Activated T-helper 1 cell treated with anti-CD3 and anti-CD28 coated beads, Interleukin-12 subunit alpha, Interleukin-12 subunit beta, Interleukin-2, Interleukin-4 antibody, amounts not matched to agents 30 ng/mL and 10 ng/mL and 1 ng/mL, durations not matched to agents 14 hours and 24 hours and 36 hours (primary cell): ENCODE measurements at regions of chr1 and their contacts with region 1.

Region 1: GRCh38 chr1:84573967-84574842 is at the start of gene CTBS:
- DNase-seq: peak; percentile 76
- H3K4me3 Mint-ChIP-seq: peak within 1 kb of the TSS; percentile 98
- H3K27ac Mint-ChIP-seq: peak within 1 kb of the TSS; percentile 100
- H3K4me1 Mint-ChIP-seq: peaks cover 48% of the 10 kb centered on the region
- H3K27me3 Mint-ChIP-seq: peaks cover 2% of the 10 kb centered on the region
- total RNA-seq, gene CTBS: 14.2 and 14.5 TPM in 2 replicates

Region 2: GRCh38 chr1:83086346-83086745 is 1487.9 kb before region 1 on chr1:
- intact Hi-C with region 1: no loop called
- DNase-seq: no peak
- H3K4me3 Mint-ChIP-seq: no peak overlapping the region
- H3K27ac Mint-ChIP-seq: no peak overlapping the region
- H3K4me1 Mint-ChIP-seq: no peaks in the 10 kb centered on the region
- H3K27me3 Mint-ChIP-seq: no peaks in the 10 kb centered on the region

Region 3: DNA sequence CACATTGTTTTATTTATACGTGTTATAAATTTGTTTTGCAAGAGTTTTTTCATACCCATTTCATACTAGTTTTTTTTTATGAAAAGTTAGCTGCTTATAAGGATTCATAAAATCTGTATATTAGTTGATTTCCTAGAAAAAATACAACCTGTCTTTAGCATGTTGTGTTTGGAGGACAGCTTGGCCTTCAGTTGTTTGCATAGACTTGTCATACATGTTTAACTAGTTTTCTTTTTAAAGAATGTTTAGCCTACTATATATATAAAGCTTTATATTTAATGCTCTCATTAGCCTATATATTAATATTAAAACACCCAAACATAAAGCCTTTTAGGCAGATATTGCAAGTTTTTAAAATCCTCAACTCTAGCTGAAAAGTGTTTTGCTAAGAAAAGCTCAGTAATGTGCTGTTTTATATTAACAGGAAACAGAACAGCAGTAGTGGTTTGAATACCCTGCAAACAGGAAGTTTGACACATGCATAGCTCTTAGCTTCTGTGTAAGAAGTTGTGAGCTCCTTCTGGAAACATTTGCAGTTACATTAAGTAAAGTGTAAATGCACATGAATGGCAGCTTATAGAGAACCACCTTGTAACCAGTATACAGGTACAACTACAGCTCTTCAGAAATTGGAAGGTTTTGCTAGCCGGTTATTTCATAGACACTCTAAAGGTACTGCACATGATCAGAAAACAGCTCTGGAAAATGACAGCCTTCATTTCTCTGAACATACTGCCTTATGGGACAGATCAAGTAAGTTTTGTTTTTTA is 430.2 kb before region 1 on chr1 and contains the start of gene PRKACB:
- intact Hi-C with region 1: loop called (anchors 1 kb)
- DNase-seq: peak; percentile 20
- H3K4me3 Mint-ChIP-seq: peak within 1 kb of the TSS; percentile 96
- H3K27ac Mint-ChIP-seq: peak within 1 kb of the TSS; percentile 99
- H3K4me1 Mint-ChIP-seq: peaks cover 44% of the 10 kb centered on the region
- H3K27me3 Mint-ChIP-seq: no peaks in the 10 kb centered on the region
- total RNA-seq, gene PRKACB: 20.8 and 22.7 TPM in 2 replicates

Region 4: DNA sequence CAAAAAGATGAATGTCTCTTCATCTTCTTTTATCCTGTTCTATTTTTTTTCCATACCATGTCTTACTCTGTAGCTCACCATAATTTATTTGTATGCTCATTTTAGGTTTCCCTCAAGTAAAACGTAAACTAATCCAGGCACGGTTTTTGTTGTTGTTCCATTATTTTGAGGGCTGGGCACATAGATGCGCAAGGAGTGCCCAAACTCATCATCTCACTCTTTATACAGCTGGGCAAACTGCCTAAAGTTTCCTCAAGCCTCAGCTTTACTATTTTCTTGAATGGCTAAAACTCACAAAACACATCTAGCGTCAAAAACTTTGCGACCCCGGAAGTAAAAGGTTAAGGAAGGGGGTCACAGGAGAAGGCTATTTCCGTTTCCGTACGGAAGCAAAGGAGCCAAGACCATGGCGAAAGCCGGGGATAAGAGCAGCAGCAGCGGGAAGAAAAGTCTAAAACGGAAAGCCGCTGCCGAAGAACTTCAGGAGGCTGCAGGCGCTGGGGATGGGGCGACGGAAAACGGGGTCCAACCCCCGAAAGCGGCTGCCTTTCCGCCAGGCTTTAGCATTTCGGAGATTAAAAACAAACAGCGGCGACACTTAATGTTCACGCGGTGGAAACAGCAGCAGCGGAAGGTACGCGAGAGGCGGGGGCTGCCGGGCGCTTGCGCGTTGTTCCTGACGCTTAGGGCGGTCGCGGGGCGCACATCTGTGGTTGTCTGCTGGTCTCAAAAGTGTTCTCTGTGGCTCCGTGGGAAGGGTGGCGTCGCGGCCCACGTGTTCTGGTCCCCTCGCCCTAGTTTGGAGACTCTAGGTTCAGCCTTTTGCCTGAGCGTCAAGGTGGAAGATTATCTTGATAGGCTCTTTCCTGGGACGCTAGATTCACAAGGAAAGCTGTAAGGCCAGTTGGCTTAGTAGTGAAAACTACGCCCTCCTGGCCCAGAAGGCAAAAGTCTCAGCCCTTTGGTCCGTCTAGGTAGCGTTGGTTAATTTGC is 95.0 kb before region 1 on chr1 and contains the start of gene RPF1:
- intact Hi-C with region 1: loop called (anchors 1 kb)
- DNase-seq: peak; percentile 70
- H3K4me3 Mint-ChIP-seq: peak within 1 kb of the TSS; percentile 98
- H3K27ac Mint-ChIP-seq: peak within 1 kb of the TSS; percentile 97
- H3K4me1 Mint-ChIP-seq: peaks cover 34% of the 10 kb centered on the region
- H3K27me3 Mint-ChIP-seq: peaks cover 28% of the 10 kb centered on the region
- total RNA-seq, gene RPF1: 65.2 and 65.5 TPM in 2 replicates

Region 5: DNA sequence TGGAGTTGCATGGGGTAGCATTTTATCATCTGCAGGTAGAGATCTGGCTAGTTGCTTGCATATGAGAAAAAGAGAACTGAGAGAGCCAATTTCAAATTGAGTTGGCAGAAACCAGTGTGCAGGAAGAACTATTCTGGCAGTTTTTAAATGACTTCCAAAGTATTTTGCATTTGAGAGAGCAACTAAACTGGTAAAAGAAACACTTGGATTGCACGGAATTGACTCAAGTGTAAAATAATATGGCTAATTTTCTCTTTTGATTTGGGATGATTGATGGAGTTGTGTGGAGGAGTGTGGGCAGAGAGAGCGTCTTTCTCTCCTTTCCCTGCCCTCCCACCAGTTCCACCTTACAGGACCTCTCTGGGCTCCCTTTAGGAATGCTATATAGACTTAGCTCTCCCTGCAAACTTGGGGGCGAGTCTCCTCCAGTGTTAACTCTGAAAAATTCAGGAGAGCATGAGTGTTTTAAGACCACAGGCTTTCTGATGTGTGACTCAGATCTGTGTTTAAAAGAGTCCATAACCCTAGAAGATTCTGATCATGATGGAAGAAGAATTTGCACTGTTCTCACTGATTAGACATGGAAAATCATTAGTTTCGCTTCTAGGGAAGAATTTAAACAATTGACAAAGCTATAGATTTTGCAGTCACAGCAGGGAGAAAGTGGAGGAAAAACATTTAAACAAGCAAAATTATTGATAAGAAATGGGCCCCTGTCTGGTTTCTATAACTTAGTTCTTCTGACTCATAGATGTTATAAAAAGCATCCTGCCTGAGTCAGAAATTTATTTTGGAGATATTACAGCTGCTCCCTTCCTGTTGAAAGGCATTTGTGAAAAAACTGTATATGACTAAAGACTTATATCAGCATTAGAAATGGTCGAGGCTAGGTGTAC is 24.9 kb after region 1 on chr1:
- intact Hi-C with region 1: loop called (anchors 1 kb)
- DNase-seq: no peak
- H3K4me3 Mint-ChIP-seq: peak overlapping the region; percentile 30
- H3K27ac Mint-ChIP-seq: peak overlapping the region; percentile 78
- H3K4me1 Mint-ChIP-seq: peaks cover 24% of the 10 kb centered on the region
- H3K27me3 Mint-ChIP-seq: no peaks in the 10 kb centered on the region

Region 6: GRCh38 chr1:84611796-84612195 is 37.6 kb after region 1 on chr1:
- intact Hi-C with region 1: no loop called
- DNase-seq: no peak
- H3K4me3 Mint-ChIP-seq: no peak overlapping the region
- H3K27ac Mint-ChIP-seq: no peak overlapping the region
- H3K4me1 Mint-ChIP-seq: peaks cover 6% of the 10 kb centered on the region
- H3K27me3 Mint-ChIP-seq: no peaks in the 10 kb centered on the region

Region 7: DNA sequence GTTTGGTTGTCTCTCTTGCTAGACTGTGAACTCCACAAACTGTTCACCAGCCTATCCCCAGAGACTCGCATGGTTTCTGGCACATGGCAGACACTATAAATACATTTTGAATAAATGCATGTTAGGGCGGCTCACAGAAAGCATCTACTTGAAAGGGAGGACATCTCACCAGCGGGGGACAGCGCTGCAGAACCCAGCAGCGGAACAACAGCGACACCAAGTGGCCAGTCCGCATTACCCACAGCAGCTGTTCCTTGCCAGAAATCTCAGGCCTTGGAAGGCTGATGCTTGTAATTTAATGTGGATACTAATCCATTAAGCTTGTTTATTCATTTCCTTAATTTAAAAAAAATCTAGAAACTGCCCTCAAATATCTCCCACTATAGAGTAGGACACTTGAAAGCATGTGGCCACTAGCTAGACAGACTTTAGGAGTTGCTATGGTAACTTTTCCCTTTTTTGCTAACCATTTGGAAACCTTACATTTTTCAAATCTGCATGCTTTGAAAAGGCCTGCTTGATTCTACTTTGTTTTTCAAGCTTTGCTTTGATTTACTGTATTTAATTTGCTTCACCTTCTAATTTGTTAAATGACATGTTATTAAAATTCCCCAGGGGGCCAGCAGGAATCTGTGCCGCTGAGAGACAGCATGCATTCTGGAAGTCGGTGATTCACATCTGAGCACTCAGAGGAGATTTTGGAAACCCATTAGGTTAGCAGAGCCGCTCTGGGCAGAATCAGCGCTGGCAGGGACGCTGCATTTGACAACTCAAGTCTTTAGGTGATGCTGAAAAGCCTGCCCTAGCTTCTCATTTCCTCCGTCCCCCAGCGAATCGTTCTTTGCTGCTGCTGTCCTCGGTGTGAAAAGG is 179.5 kb after region 1 on chr1:
- intact Hi-C with region 1: loop called (anchors 5 kb)
- DNase-seq: peak; percentile 57
- H3K4me3 Mint-ChIP-seq: no peak overlapping the region
- H3K27ac Mint-ChIP-seq: no peak overlapping the region
- H3K4me1 Mint-ChIP-seq: peaks cover 5% of the 10 kb centered on the region
- H3K27me3 Mint-ChIP-seq: peaks cover 26% of the 10 kb centered on the region

Region 8: DNA sequence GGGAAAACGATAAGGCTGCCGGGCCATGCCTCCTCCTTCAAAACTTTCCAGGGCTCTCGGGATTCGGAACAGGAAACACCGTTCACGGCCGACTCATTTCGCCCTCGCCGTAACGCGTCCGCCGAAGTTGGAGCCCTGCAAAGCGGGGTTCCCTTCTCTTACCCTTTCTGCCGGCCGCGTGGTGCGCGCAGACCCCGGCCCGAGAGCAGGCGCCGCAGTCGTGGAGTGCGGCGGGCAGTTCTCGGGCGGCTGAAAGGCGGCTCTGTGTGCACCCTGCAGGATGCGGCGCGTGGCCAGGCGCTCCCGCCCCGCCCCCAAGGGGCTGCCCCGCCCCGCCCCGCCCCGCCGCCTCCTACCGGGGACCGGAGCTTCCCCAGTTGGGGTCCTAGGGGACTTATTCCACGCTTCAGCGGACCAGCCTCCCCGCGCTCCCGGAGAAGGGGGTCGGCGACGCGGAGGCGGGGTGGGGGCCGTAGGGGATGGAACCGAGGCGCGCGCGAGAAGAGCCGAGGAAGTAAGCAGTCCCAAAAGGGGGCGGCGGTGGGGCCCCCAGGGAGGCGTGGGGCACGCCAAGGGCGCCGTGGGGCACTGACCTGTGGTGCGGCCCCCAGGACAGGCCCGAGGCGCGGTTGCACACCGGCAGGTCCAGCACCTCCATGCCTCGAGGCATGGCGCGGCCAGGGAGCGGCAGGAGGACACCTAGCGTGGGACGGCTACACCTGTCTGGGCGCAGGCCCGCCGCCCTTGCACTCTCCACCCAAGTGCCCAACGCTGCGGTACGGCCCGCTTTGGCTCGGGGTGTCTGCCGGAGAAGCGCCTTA is 422.9 kb after region 1 on chr1 and contains the start of gene MCOLN2:
- intact Hi-C with region 1: loop called (anchors 5 kb)
- DNase-seq: peak; percentile 52
- H3K4me3 Mint-ChIP-seq: peak within 1 kb of the TSS; percentile 88
- H3K27ac Mint-ChIP-seq: peak within 1 kb of the TSS; percentile 88
- H3K4me1 Mint-ChIP-seq: peaks cover 55% of the 10 kb centered on the region
- H3K27me3 Mint-ChIP-seq: peaks cover 12% of the 10 kb centered on the region
- total RNA-seq, gene MCOLN2: 117 and 119 TPM in 2 replicates